Body of pancreas (tissue), 4 donors: ENCODE measurements at regions of chr13 and their contacts with region 1.

Region 1: DNA sequence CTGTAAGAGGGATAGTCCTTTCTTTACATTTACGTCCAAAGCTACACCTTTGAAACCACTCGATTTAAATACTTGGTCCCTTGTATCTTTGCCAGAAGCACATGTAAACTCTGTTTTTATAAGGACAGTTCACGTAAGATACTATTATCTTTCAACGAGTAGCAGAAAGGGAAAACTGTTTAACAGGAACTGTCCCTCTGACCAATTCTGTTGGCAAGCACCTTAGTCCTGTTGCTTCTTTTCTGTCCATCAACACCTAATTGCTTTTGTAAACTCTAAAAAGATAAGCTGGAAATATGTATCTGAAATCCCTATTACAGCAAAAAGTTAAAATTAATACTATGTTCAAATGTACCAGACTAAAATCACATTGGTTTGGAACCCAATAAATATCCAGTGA is 37.4 kb downstream of the PCDH9 start:
- DNase-seq: no peak
- ATAC-seq: no peak
- H3K4me3 ChIP-seq: no peak overlapping the region
- H3K27ac ChIP-seq: no peak overlapping the region
- H3K4me1 ChIP-seq: peaks cover 3% of the 10 kb centered on the region
- H3K27me3 ChIP-seq: no peaks in the 10 kb centered on the region
- CTCF ChIP-seq: no peak
- POLR2A ChIP-seq: no peak

Region 2: DNA sequence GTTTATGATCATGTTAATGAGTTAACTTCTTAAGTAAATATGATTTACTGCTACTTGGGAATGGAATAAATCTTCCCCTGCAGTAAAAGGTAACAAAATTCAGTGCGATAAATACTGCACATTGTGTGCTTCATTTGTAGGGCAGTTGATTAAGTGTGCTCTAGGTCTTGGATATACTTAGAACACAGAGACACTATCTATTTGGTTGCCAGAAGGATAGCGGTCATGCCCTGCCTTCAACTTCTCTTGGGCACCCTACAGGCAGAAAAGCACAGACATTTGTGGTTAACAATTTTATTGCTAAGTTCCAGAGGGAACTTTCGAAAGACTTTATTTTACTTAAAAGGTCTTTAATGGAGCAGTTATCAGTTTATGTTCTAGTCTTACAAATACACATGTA is 568.4 kb before region 1 on chr13:
- intact Hi-C with region 1: loop called (anchors 10 kb)
- DNase-seq: no peak
- ATAC-seq: no peak
- H3K4me3 ChIP-seq: no peak overlapping the region
- H3K27ac ChIP-seq: no peak overlapping the region
- H3K4me1 ChIP-seq: no peaks in the 10 kb centered on the region
- H3K27me3 ChIP-seq: no peaks in the 10 kb centered on the region
- CTCF ChIP-seq: no peak
- POLR2A ChIP-seq: no peak